ENCODE measurements at regions of chr5 and their contacts with region 1.

Region 1: GRCh38 chr5:12825163-12825562 is 920.9 kb upstream of the CTNND2 start:
- DNase-seq: no peak
- H3K4me3 ChIP-seq: no peak overlapping the region
- H3K27ac ChIP-seq: no peak overlapping the region
- H3K4me1 ChIP-seq: no peaks in the 10 kb centered on the region
- H3K27me3 ChIP-seq: no peaks in the 10 kb centered on the region
- CTCF ChIP-seq: no peak

Region 2: DNA sequence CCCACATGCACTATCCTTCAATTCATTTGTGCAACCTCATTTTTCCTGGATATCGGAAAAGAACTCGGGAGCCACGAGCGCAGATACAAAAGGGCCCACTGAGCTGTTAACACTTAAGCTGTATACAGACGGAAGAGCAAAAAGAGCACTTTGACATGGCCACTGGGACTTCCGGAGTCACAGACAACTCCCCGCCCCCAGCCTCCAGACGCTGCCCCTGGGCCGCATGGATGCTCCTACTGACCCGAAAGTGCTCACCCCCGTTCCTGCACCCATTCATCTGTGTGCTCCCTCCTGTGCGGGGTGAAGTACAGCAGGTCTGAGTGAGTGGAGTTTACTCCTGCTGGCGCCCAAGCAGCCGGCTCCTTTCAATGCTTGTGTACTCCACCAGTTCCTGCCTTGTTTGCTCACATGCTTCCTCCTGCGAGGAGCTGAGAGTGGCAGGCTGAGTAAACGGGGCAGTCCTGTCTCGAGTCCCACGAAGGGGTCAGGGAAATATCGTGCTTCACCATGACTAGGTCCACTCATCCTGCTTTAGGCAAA is 19.9 kb before region 1 on chr5:
- CTCF ChIA-PET with region 1: no interaction called
- POLR2A ChIA-PET with region 1: no interaction called
- intact Hi-C with region 1: loop called (anchors 1 kb)
- DNase-seq: no peak
- H3K4me3 ChIP-seq: no peak overlapping the region
- H3K27ac ChIP-seq: no peak overlapping the region
- H3K4me1 ChIP-seq: no peaks in the 10 kb centered on the region
- H3K27me3 ChIP-seq: no peaks in the 10 kb centered on the region
- CTCF ChIP-seq: no peak